HEK293T (cell line): ENCODE measurements at regions of chr1 and their contacts with region 1.

Region 1: DNA sequence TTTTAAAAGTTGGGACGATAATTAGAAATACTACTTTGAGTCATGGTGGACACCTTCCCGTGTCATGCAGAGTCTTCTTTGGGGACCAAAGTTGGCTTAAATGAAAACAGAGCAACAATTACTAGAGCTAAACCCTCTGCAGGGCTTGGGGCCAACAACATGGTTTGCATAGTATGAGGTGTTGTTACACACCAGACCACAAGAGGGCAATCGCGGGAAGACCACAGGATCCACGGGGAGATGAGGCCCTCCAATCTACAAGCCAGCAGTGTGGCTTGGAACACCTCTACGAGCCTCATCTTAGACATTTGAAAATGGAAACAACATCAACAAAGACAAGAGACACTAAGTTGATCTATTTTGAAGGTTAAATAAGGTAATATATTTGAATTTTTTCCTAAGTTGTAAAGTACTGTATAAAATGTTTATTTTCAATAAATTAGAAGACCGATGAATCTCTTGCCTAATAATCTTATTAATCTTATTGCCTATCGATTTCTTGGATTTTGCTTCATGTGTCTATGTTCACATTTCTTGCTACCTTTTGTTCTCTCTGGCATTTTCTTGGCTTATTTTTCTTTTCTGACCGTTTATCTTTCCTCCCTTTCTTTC is 8.2 kb upstream of the SMCP start:
- DNase-seq: peak; percentile 86

Region 2: GRCh38 chr1:152926091-152926490 is 56.2 kb after region 1 on chr1:
- CTCF ChIA-PET with region 1: interaction called, 10 read pairs
- POLR2A ChIA-PET with region 1: no interaction called
- DNase-seq: no peak

Region 3: DNA sequence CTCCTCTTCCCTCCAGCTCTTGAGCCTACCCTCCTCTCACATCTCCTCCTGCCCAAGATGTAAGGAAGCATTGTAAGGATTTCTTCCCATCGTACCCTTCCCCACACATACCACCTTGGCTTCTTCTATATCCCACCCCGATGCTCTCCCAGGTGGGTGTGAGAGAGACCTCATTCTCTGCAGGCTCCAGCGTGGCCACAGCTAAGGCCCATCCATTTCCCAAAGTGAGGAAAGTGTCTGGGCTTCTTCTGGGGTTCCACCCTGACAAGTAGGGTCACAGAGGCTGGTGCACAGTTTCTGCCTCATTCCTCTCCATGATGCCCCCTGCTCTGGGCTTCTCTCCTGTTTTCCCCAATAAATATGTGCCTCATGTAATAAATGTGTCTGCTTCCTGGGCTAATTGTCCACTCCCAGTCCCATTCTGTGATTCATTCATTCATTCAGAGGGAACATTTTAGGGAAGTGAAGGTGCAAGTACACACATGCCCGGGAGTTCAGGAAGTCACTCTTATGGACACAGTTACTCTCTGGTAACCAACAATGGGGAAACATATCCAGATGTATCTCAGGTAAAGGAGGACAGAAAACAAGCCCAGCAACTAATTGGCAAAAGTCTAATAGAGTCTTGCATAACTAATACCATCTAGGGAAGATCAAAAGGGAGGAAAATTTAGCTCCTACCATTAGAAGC is 102.4 kb after region 1 on chr1:
- CTCF ChIA-PET with region 1: no interaction called
- POLR2A ChIA-PET with region 1: no interaction called
- DNase-seq: no peak

Region 4: DNA sequence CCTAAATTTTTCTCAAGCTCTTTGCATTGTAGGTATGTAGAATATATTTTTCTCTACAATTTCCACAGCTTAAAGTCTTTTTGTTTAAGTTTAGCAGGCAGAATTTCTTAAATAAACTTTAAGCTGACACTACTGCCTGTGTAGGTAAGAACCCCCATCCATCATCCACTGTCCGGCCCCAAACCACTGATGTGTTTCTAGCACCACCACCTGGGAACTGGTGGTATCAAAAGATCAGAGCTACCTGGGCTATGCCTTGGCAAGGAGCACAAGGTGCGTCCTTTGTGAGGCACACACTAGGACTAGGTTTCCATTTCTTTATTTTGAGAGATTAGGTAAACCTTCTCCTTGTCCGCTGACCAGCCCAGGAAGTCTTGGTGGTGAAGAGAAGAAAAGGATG is 322.8 kb after region 1 on chr1:
- CTCF ChIA-PET with region 1: interaction called, 23 read pairs
- POLR2A ChIA-PET with region 1: no interaction called
- DNase-seq: peak; percentile 41